Activated CD4-positive, alpha-beta T cell treated with anti-CD3 and anti-CD28 coated beads for 36 hours (primary cell): ENCODE measurements at regions of chr17 and their contacts with region 1.

Region 1: GRCh38 chr17:51322390-51323029 is 62.2 kb downstream of the UTP18 start:
- DNase-seq: no peak
- ATAC-seq: peak; percentile 74
- H3K4me3 Mint-ChIP-seq: no peak overlapping the region
- H3K27ac Mint-ChIP-seq: no peak overlapping the region
- H3K4me1 Mint-ChIP-seq: no peaks in the 10 kb centered on the region
- H3K27me3 Mint-ChIP-seq: peaks cover 5% of the 10 kb centered on the region

Region 2: GRCh38 chr17:51734462-51734861 is 412.0 kb after region 1 on chr17:
- CTCF ChIA-PET with region 1: no interaction called
- POLR2A ChIA-PET with region 1: no interaction called
- intact Hi-C with region 1: loop called in 1 of 2 experiments (anchors 10 kb)
- DNase-seq: peak; percentile 48
- ATAC-seq: no peak
- H3K4me3 Mint-ChIP-seq: no peak overlapping the region
- H3K27ac Mint-ChIP-seq: no peak overlapping the region
- H3K4me1 Mint-ChIP-seq: no peaks in the 10 kb centered on the region
- H3K27me3 Mint-ChIP-seq: peaks cover 17% of the 10 kb centered on the region